CD8-positive, alpha-beta T cell (primary cell): ENCODE measurements at regions of chr15 and their contacts with region 1.

Region 1: DNA sequence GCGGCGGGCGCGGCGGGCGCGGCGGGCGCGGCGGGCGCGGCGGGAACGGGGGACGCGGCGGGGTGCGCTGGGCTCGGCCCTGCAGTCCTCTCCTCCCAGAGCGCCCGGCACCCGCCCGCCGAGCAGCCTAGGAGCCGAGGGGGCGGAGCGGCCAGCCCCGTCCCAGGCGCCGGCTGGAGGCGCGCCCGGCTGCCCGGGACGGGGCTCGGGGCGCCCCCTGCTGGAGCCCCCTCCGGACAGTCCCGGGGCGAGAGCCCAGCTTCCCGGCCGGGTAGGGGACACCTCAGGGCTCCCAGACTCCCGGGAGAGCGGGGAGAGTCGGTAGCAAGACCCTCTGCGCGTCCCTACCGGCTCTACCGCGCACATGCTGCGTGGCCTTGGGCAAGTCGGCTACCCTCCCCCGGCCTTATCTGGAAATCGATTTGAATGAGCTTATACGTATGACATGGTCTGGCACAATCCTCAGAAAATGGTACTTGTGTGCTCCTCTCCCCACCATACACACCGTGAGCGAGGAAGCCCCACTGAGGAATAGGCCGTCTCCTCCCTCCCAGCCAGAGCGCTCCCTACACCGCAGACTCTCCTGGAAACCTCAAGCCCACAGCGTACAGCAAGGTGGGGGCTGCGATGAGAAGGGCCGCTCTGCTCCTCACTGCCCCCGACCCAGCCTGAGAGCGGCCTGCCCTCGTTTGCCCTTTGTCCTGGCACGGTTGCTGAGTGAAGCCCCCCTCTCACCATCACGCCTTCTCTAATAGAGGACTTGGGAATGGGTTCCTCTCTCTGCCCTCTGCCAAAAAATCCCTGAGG is at the start of gene DAPK2:
- DNase-seq: peak; percentile 34 to 85 (median 67)
- ATAC-seq: peak; percentile 84
- H3K4me3 ChIP-seq: peak within 1 kb of the TSS; percentile 38 to 53
- H3K4me3 Mint-ChIP-seq: peak within 1 kb of the TSS; percentile 78
- H3K27ac ChIP-seq: no peak within 1 kb of the TSS
- H3K27ac Mint-ChIP-seq: peak within 1 kb of the TSS; percentile 49
- H3K4me1 ChIP-seq: peaks cover 6% of the 10 kb centered on the region
- H3K4me1 Mint-ChIP-seq: peaks cover 10% of the 10 kb centered on the region
- H3K27me3 ChIP-seq: peaks cover 0 to 4% of the 10 kb centered on the region in 2 experiments
- H3K27me3 Mint-ChIP-seq: peaks cover 2% of the 10 kb centered on the region
- CTCF ChIP-seq: peak; percentile 67
- total RNA-seq, gene DAPK2: 3.3 to 5.2 TPM

Region 2: DNA sequence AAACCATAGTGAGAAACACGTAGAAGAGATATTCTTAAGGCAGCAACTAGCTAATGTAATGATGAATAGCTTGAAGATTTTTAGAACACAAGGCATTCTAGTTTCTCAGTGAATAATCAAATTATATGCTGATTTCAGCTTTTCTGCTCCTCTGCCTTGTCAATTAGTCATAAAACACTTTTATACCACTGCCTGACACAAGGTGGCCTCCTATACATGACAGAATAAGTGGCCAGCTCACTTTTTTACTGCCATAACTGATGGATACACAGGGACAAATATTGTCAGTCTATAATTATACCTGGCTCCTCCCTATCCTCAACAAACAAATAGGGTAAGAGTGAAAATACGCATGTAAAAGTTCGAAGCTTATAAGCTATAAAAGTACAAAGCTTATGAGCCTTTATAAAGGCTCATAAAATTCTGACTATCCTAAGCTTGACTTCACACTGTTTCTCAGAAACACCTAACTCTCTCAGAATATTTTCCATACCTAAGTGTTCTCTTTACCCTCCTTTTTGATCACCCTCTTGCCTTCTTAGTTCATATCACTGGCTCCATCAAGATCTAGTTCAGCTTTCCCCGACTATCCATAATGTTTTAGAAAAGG is 294.4 kb before region 1 on chr15:
- CTCF ChIA-PET with region 1: interaction called, 85 read pairs
- POLR2A ChIA-PET with region 1: interaction called, 3 read pairs
- intact Hi-C with region 1: loop called (anchors 1 kb)
- DNase-seq: peak in 7 of 9 experiments; percentile 18 to 75 (median 28)
- ATAC-seq: peak; percentile 86
- H3K4me3 ChIP-seq: no peak overlapping the region
- H3K4me3 Mint-ChIP-seq: no peak overlapping the region
- H3K27ac ChIP-seq: no peak overlapping the region
- H3K27ac Mint-ChIP-seq: peak overlapping the region; percentile 78
- H3K4me1 ChIP-seq: no peaks in the 10 kb centered on the region
- H3K4me1 Mint-ChIP-seq: peaks cover 6% of the 10 kb centered on the region
- H3K27me3 ChIP-seq: no peaks in the 10 kb centered on the region
- H3K27me3 Mint-ChIP-seq: no peaks in the 10 kb centered on the region
- CTCF ChIP-seq: peak; percentile 85

Region 3: DNA sequence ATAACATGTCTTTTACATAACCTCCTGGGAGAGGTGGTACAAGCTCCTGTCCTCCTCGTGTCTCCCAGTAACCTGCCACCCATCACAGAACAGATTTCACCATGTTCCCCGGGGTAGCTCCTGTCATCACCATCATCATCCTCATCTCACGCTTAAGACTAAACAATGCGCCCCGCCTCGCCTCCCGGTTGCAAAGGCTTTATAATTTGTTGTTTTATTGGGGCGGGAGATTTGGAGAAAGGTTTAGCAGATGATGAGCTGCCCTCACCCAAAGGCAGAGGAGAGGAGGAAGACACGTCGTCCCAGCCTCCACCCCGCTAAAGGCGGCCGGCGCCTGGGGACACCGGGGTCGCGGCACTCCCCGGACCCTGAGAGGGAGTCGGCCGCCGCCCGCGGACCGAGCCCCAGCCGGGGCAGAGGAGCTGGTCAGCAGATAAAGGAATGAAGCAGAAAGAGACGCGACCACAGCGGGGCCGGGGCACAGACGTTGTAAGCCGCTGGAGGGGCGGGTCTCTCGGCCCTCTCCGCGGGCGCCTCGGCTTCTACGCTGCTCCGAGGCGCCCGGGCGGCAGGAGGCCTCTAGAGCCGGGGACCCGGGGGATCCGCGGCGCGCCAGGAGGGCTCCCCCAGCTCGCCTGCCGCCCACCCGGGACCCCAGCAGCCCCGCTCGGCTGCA is 213.4 kb before region 1 on chr15:
- CTCF ChIA-PET with region 1: interaction called, 4 read pairs
- POLR2A ChIA-PET with region 1: no interaction called
- intact Hi-C with region 1: loop called (anchors 2 to 5 kb)
- DNase-seq: peak in 7 of 9 experiments; percentile 10 to 59 (median 28)
- ATAC-seq: peak; percentile 34
- H3K4me3 ChIP-seq: peak overlapping the region; percentile 93 to 99
- H3K4me3 Mint-ChIP-seq: peak overlapping the region; percentile 98
- H3K27ac ChIP-seq: peak overlapping the region; percentile 92 to 98
- H3K27ac Mint-ChIP-seq: peak overlapping the region; percentile 94
- H3K4me1 ChIP-seq: peaks cover 40% of the 10 kb centered on the region
- H3K4me1 Mint-ChIP-seq: peaks cover 56% of the 10 kb centered on the region
- H3K27me3 ChIP-seq: no peaks in the 10 kb centered on the region
- H3K27me3 Mint-ChIP-seq: no peaks in the 10 kb centered on the region
- CTCF ChIP-seq: no peak

Region 4: DNA sequence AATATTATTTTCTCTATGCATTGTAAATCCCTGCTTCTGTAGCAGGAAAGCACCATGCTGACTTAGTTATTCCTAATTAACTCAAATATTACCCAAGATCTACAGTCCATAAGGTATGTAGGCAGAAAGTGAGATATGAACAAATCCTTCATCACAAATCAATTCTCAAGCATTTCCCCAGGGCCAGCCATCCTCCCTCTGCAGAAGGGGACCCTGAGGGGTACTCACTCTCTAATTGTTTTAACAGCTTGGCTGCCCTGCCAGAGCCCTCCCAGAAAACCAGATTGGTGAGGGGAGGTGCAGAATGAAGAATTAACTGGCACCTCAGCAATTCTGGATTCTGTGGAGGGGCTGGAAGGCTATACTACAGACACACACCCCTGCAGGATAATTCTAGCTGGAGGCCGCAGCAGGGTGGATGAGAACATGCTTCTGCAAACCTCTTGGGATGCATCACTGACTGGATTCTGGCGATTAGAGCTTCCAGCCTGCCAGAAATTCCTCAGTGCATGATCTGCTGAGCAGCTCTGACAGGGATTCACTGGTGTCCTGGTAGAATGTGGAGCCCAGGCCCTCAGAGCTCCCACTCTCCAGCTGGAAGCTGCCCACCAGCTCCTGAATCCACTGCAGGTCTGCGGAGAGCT is 124.2 kb before region 1 on chr15:
- CTCF ChIA-PET with region 1: interaction called, 11 read pairs
- POLR2A ChIA-PET with region 1: no interaction called
- intact Hi-C with region 1: no loop called
- DNase-seq: no peak
- ATAC-seq: no peak
- H3K4me3 ChIP-seq: no peak overlapping the region
- H3K4me3 Mint-ChIP-seq: no peak overlapping the region
- H3K27ac ChIP-seq: no peak overlapping the region
- H3K27ac Mint-ChIP-seq: no peak overlapping the region
- H3K4me1 ChIP-seq: peaks cover 10% of the 10 kb centered on the region
- H3K4me1 Mint-ChIP-seq: peaks cover 19% of the 10 kb centered on the region
- H3K27me3 ChIP-seq: no peaks in the 10 kb centered on the region
- H3K27me3 Mint-ChIP-seq: no peaks in the 10 kb centered on the region
- CTCF ChIP-seq: no peak

Region 5: DNA sequence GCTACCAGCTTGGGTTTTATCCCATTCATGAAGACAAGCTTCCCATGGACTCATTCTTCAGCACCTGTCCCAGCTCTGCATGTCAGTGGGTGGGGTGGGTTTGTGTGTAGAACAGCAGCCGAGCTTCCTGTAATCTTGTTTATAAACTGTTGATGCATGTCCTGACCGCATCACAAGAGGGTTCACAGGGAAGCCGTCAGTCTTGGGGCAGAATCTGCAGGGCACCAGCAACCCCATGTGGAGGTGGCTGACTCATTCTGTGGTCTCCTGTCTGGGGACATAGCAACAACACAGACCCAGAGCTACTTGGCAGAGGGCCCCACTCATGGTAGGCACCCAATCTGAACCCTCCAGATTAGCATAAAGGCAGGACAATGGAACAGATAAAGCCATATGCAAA is 35.8 kb before region 1 on chr15:
- CTCF ChIA-PET with region 1: interaction called, 11 read pairs
- POLR2A ChIA-PET with region 1: interaction called, 9 read pairs
- intact Hi-C with region 1: loop called in 1 of 2 experiments (anchors 1 kb)
- DNase-seq: peak; percentile 78 to 97 (median 89)
- ATAC-seq: peak; percentile 89
- H3K4me3 ChIP-seq: no peak overlapping the region
- H3K4me3 Mint-ChIP-seq: peak overlapping the region; percentile 72
- H3K27ac ChIP-seq: peak overlapping the region; percentile 52 to 67
- H3K27ac Mint-ChIP-seq: peak overlapping the region; percentile 98
- H3K4me1 ChIP-seq: peaks cover 29% of the 10 kb centered on the region
- H3K4me1 Mint-ChIP-seq: peaks cover 40% of the 10 kb centered on the region
- H3K27me3 ChIP-seq: no peaks in the 10 kb centered on the region
- H3K27me3 Mint-ChIP-seq: no peaks in the 10 kb centered on the region
- CTCF ChIP-seq: no peak

Region 6: DNA sequence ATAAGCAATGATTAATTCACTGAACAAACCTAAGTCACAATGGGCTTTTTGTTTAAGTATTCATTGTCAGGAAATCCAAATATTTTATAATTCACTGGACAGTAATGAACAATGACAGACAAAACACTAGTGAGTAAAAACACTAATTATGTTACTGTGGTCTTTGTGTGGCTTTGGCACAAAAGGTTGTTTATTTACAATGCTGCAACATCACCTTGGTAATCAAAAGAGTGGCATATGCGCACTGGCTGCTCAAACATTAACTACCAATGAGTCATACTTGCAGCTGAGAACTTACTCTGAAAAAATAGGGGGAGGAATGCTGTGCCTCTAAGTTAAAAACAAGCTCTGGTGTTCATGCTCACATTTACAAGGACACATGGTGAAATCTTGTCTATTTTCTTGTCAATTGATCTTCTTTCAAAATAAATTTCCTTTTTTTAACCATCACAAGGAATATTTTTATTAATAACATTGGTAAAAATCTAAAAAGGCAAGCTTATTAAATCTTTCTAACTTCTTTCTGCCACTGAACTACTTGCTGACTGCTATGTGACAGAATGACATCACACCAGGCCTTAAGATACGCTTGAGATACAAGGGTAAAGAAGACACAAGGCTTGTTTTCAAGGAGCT is 201.5 kb after region 1 on chr15:
- CTCF ChIA-PET with region 1: no interaction called
- POLR2A ChIA-PET with region 1: no interaction called
- intact Hi-C with region 1: no loop called
- DNase-seq: peak in 4 of 9 experiments; percentile 21 to 69 (median 54)
- ATAC-seq: peak; percentile 74
- H3K4me3 ChIP-seq: no peak overlapping the region
- H3K4me3 Mint-ChIP-seq: no peak overlapping the region
- H3K27ac ChIP-seq: peak overlapping the region in 1 of 2 experiments; percentile 39
- H3K27ac Mint-ChIP-seq: peak overlapping the region; percentile 50
- H3K4me1 ChIP-seq: no peaks in the 10 kb centered on the region
- H3K4me1 Mint-ChIP-seq: peaks cover 27% of the 10 kb centered on the region
- H3K27me3 ChIP-seq: no peaks in the 10 kb centered on the region
- H3K27me3 Mint-ChIP-seq: no peaks in the 10 kb centered on the region
- CTCF ChIP-seq: no peak

Region 7: DNA sequence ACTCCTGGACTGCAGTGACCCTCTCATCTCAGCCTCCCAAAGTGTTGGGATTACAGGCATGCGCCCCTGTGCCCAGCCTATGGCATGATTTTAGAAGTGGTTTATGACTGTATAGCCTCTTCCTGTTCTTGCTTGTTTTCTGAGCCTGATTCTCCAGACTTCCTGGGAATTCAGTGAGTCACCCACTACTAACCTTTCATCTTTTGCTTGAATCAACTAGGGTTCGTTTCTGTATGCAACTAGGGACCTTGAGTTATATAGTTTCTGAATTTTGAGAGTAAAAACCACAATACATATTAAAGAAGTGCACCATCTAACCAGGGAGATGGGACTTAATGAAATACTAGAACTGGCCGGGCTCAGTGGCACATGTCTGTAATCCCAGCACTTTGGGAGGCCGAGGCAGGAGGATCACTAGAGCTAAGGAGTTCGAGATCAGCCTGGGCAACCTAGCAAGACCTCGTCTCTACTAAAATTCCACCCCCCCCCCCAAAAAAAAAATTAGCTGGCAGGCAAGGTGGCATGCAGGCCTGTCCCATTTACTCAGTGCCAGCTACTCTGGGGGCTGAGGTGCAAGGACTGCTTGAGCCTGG is 489.8 kb after region 1 on chr15:
- CTCF ChIA-PET with region 1: no interaction called
- POLR2A ChIA-PET with region 1: no interaction called
- intact Hi-C with region 1: no loop called
- DNase-seq: no peak
- ATAC-seq: no peak
- H3K4me3 ChIP-seq: no peak overlapping the region
- H3K4me3 Mint-ChIP-seq: no peak overlapping the region
- H3K27ac ChIP-seq: no peak overlapping the region
- H3K27ac Mint-ChIP-seq: no peak overlapping the region
- H3K4me1 ChIP-seq: peaks cover 35% of the 10 kb centered on the region
- H3K4me1 Mint-ChIP-seq: peaks cover 48% of the 10 kb centered on the region
- H3K27me3 ChIP-seq: no peaks in the 10 kb centered on the region
- H3K27me3 Mint-ChIP-seq: no peaks in the 10 kb centered on the region
- CTCF ChIP-seq: no peak